Aorta (tissue), 5 donors: ENCODE measurements at regions of chr2 and their contacts with region 1.

Region 1: GRCh38 chr2:189267925-189268579 is 88.5 kb upstream of the COL5A2 start:
- DNase-seq: no peak
- ATAC-seq: no peak
- H3K4me3 ChIP-seq: no peak overlapping the region
- H3K27ac ChIP-seq: no peak overlapping the region
- H3K4me1 ChIP-seq: no peaks in the 10 kb centered on the region
- H3K27me3 ChIP-seq: no peaks in the 10 kb centered on the region

Region 2: DNA sequence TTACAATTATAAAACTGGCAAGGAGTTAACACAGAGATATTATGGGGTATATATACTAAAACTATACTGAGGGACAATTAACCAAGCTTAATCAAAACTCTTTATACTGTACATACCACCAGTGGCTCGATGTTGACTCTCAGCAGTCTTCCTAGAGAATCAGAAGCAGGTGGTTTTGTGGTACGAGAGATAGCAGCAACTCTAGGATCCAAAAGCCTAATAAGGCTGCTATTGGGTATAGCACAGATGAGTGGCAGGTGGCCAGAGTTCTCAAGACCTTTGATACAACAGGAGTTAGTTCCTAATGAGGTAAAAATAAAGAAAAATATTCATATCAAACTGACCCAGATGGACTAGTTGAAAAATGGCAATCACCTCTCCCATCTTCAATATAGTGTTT is 43.0 kb before region 1 on chr2:
- intact Hi-C with region 1: loop called in 1 of 2 experiments (anchors 5 kb)
- DNase-seq: no peak
- ATAC-seq: no peak
- H3K4me3 ChIP-seq: no peak overlapping the region
- H3K27ac ChIP-seq: no peak overlapping the region
- H3K4me1 ChIP-seq: no peaks in the 10 kb centered on the region
- H3K27me3 ChIP-seq: no peaks in the 10 kb centered on the region